Endothelial cell of umbilical vein (primary cell): ENCODE measurements at regions of chr14 and their contacts with region 1.

Region 1: DNA sequence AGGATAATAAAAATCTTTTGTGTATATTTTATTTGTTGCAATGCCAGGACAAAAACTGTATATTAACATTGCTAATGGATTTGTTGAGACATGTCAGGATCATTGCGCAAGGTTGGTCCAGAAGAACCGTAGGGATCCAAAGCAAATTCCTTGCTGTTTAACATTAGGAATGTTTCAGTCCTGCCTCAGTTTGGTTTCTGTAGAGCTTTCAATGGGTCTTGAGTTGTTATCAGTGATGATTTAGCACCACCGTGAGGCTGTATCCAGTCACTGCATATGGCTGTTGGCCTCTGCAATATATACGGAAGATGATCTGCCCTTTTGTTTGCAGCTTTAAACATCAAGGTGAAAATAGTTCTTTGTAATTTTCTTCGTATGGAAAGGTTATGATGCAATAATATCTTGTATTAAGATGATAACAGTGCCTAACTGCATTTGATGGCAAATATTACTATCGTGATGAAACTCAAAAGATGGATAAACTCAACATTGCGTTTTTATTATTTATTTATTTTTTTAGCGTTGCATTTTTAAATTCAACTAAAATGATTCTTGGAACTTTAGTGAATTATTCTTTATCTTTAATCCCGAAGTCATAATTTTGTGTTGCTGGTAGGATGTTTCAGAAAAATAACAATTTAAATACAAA is 231.2 kb downstream of the AKAP6 start:
- DNase-seq: peak; percentile 76
- H3K4me3 ChIP-seq: no peak overlapping the region
- H3K27ac ChIP-seq: no peak overlapping the region
- H3K4me1 ChIP-seq: peaks cover 2% of the 10 kb centered on the region
- H3K27me3 ChIP-seq: no peaks in the 10 kb centered on the region
- CTCF ChIP-seq: peak; percentile 76 to 83
- POLR2A ChIP-seq: no peak

Region 2: GRCh38 chr14:31510222-31510621 is 1050.1 kb before region 1 on chr14:
- CTCF ChIA-PET with region 1: interaction called, 41 read pairs
- POLR2A ChIA-PET with region 1: no interaction called
- dilution Hi-C with region 1: no loop called
- intact Hi-C with region 1: loop called (anchors 2 kb)
- DNase-seq: peak; percentile 38
- H3K4me3 ChIP-seq: no peak overlapping the region
- H3K27ac ChIP-seq: no peak overlapping the region
- H3K4me1 ChIP-seq: no peaks in the 10 kb centered on the region
- H3K27me3 ChIP-seq: peaks cover 1 to 2% of the 10 kb centered on the region in 2 experiments
- CTCF ChIP-seq: peak; percentile 13 to 22
- POLR2A ChIP-seq: no peak

Region 3: DNA sequence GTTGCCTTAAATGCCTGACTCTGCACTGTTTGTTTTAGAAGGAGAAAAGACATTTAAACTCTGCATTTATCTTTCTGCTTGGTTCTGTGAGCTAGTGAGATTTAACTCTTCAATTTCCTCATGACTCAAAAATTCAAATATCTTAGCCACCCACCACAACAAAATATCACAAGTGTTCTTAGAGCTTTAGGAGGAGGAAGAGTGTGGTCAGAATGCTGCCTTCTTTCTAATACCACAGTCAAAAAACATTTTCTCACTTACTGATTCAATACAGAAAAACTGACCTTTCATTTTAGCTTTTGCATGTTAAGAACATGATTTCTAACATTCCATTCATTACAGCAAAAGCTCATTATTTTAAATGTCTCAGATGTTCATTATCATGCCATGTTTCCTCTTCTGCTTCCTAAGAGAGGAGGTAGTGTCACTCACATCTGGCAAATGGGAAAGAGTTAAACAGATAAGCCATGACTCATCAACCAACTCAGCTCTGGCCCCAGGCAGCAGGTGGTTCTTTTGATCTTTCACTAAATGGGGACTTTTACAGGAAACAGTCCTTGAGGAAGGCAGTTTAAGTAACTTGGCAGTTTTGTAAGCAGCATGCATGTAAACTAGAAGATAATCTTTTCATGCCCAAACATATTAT is 300.8 kb before region 1 on chr14:
- CTCF ChIA-PET with region 1: interaction called, 95 read pairs
- POLR2A ChIA-PET with region 1: no interaction called
- dilution Hi-C with region 1: no loop called
- intact Hi-C with region 1: loop called (anchors 1 kb)
- DNase-seq: peak; percentile 56
- H3K4me3 ChIP-seq: no peak overlapping the region
- H3K27ac ChIP-seq: no peak overlapping the region
- H3K4me1 ChIP-seq: peaks cover 8% of the 10 kb centered on the region
- H3K27me3 ChIP-seq: peaks cover 0 to 3% of the 10 kb centered on the region in 2 experiments
- CTCF ChIP-seq: no peak
- POLR2A ChIP-seq: no peak

Region 4: DNA sequence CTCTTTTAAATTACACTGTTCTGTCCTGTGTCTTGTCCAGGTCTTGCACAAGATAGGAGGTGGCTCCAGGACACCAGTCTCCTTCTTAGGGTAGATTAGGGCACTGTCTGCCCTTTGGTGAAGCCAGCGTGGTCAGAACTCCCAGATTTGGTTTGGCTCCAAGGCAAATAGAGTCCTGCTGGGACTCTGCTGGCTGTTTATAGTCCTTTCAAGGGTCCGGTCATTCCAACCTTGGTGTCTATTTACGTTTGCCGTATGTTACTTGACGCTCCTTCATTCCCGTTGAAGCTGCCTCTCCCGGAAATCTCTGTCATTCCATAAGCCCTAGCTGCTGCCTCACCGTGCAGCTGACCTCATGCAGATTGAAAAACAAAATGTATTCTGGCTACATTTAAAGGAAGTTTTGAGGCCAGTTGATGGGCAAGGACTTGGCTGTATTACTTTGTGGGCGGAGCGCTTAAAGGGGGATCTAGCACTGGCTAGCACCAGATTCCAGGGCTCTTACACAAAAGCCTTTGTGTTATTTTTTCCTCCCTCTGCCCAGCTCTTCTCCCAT is 50.6 kb before region 1 on chr14:
- CTCF ChIA-PET with region 1: interaction called, 30 read pairs
- POLR2A ChIA-PET with region 1: no interaction called
- dilution Hi-C with region 1: no loop called
- intact Hi-C with region 1: loop called (anchors 2 kb)
- DNase-seq: peak; percentile 98
- H3K4me3 ChIP-seq: no peak overlapping the region
- H3K27ac ChIP-seq: peak overlapping the region; percentile 67
- H3K4me1 ChIP-seq: peaks cover 25% of the 10 kb centered on the region
- H3K27me3 ChIP-seq: no peaks in the 10 kb centered on the region
- CTCF ChIP-seq: no peak
- POLR2A ChIP-seq: peak; percentile 41

Region 5: DNA sequence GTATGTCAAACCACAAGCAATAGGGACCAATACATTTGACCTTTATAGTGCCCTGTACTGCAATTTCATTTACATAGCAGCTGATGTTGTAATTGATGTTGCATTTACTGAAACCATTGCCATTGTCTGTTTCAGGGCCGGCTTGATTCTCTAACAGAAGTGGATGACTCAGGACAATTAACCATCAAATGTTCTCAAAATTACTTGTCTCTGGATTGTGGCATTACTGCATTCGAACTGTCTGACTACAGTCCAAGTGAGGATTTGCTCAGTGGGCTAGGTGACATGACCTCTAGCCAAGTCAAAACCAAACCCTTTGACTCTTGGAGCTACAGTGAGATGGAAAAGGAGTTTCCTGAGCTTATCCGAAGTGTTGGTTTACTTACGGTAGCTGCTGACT is 15.2 kb before region 1 on chr14:
- CTCF ChIA-PET with region 1: interaction called, 12 read pairs
- POLR2A ChIA-PET with region 1: no interaction called
- dilution Hi-C with region 1: no loop called
- intact Hi-C with region 1: no loop called
- DNase-seq: no peak
- H3K4me3 ChIP-seq: no peak overlapping the region
- H3K27ac ChIP-seq: no peak overlapping the region
- H3K4me1 ChIP-seq: no peaks in the 10 kb centered on the region
- H3K27me3 ChIP-seq: peaks cover 2 to 3% of the 10 kb centered on the region in 2 experiments
- CTCF ChIP-seq: no peak
- POLR2A ChIP-seq: no peak

Region 6: GRCh38 chr14:32779840-32780239 is 219.5 kb after region 1 on chr14:
- CTCF ChIA-PET with region 1: no interaction called
- POLR2A ChIA-PET with region 1: no interaction called
- dilution Hi-C with region 1: no loop called
- intact Hi-C with region 1: no loop called
- DNase-seq: no peak
- H3K4me3 ChIP-seq: no peak overlapping the region
- H3K27ac ChIP-seq: no peak overlapping the region
- H3K4me1 ChIP-seq: no peaks in the 10 kb centered on the region
- H3K27me3 ChIP-seq: no peaks in the 10 kb centered on the region
- CTCF ChIP-seq: no peak
- POLR2A ChIP-seq: no peak